ENCODE measurements at regions of chr2 and their contacts with region 1.

Region 1: GRCh38 chr2:54704688-54705605 is 18.5 kb upstream of the EML6 start:
- DNase-seq: peak in 1 of 2 experiments; percentile 52
- H3K4me3 ChIP-seq: no peak overlapping the region
- H3K27ac ChIP-seq: no peak overlapping the region
- H3K4me1 ChIP-seq: no peaks in the 10 kb centered on the region
- H3K27me3 ChIP-seq: no peaks in the 10 kb centered on the region
- CTCF ChIP-seq: peak; percentile 91

Region 2: GRCh38 chr2:53786705-53787612 is 918.0 kb before region 1 on chr2 and contains the starts of genes ASB3 and ERLEC1:
- CTCF ChIA-PET with region 1: no interaction called
- POLR2A ChIA-PET with region 1: no interaction called
- intact Hi-C with region 1: loop called (anchors 10 kb)
- DNase-seq: peak; percentile 73 to 85
- H3K4me3 ChIP-seq: peak within 1 kb of the TSS; percentile 88
- H3K27ac ChIP-seq: peak within 1 kb of the TSS; percentile 51
- H3K4me1 ChIP-seq: peaks cover 26% of the 10 kb centered on the region
- H3K27me3 ChIP-seq: no peaks in the 10 kb centered on the region
- CTCF ChIP-seq: no peak
- total RNA-seq, gene ASB3: 22.0 and 27.7 TPM in 2 replicates
- total RNA-seq, gene ERLEC1: 34.9 and 35.7 TPM in 2 replicates

Region 3: DNA sequence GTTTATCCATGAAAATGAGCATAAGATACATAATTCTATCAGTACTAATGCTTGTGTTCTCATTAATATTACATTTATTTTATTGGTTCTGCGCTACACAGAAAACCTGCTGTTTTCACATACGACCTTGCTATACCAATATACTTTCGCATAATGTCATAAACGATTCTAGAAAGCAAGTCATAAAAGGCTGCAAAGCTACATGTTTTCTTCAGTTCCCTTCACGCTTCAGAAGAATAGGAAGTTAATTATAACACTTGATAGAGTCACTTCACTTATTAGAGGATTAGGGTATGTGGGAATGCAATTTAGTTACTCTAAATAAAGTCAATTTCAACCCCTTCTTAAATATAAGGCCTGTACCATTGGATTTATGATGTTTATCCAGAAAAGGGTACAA is 763.2 kb before region 1 on chr2:
- CTCF ChIA-PET with region 1: no interaction called
- POLR2A ChIA-PET with region 1: no interaction called
- intact Hi-C with region 1: loop called (anchors 5 kb)
- DNase-seq: no peak
- H3K4me3 ChIP-seq: no peak overlapping the region
- H3K27ac ChIP-seq: 0 out of 2 replicates have a peak overlapping the region, but pooled peaks have one; percentile 2
- H3K4me1 ChIP-seq: no peaks in the 10 kb centered on the region
- H3K27me3 ChIP-seq: no peaks in the 10 kb centered on the region
- CTCF ChIP-seq: no peak

Region 4: DNA sequence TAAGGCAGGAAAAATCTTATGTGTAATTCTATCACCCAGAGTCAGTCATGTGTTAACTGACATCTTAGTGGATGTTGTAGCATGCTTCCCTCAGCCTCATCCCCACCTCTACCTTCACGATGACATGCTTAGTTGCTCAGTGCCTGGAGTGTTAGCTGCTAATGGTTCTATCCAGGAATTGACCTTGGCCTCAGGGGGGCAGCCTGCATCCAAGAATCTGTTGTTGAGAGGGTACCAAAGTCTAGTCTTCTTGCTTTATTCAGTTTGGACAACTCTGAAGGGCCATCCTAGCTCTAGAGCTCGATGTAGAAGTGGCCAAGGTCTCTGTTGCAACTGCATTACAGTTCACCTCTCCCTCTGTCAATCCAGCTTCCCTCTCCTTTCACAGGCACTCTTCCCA is 528.4 kb before region 1 on chr2:
- CTCF ChIA-PET with region 1: interaction called, 4 read pairs
- POLR2A ChIA-PET with region 1: no interaction called
- intact Hi-C with region 1: loop called (anchors 5 kb)
- DNase-seq: peak in 1 of 2 experiments; percentile 40
- H3K4me3 ChIP-seq: no peak overlapping the region
- H3K27ac ChIP-seq: no peak overlapping the region
- H3K4me1 ChIP-seq: no peaks in the 10 kb centered on the region
- H3K27me3 ChIP-seq: no peaks in the 10 kb centered on the region
- CTCF ChIP-seq: peak; percentile 46

Region 5: DNA sequence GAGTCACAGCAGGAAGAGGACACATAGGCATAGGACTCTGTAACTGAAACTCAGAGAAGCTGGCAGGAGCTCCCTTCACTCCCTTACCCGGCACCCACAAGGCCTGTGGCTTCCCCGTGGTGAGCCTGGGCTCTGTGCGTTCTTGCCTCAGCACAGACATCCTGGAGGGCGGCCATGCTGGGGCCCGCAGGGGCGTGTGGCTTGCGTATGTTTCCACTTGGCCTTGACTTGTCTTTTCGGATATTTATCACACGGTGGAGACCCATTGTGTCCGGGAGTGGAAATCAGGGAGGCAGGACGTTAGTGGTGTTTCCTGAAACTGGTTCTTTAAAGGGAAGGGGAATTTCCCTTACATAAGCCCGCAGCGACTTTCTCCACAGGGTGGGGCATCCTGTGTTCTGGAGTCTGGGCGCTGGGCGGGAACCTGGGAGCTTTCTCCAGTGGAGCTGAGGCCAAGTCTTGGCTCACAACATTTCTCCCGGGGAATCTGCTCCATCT is 31.4 kb before region 1 on chr2:
- CTCF ChIA-PET with region 1: interaction called, 8 read pairs
- POLR2A ChIA-PET with region 1: no interaction called
- intact Hi-C with region 1: loop called (anchors 2 kb)
- DNase-seq: peak in 1 of 2 experiments; percentile 60
- H3K4me3 ChIP-seq: no peak overlapping the region
- H3K27ac ChIP-seq: peak overlapping the region; percentile 58
- H3K4me1 ChIP-seq: peaks cover 31% of the 10 kb centered on the region
- H3K27me3 ChIP-seq: no peaks in the 10 kb centered on the region
- CTCF ChIP-seq: no peak

Region 6: GRCh38 chr2:54850171-54851122 is 145.5 kb after region 1 on chr2:
- CTCF ChIA-PET with region 1: no interaction called
- POLR2A ChIA-PET with region 1: no interaction called
- intact Hi-C with region 1: no loop called
- DNase-seq: no peak
- H3K4me3 ChIP-seq: no peak overlapping the region
- H3K27ac ChIP-seq: no peak overlapping the region
- H3K4me1 ChIP-seq: no peaks in the 10 kb centered on the region
- H3K27me3 ChIP-seq: no peaks in the 10 kb centered on the region
- CTCF ChIP-seq: no peak

Measured in PC-9 (cell line).